ENCODE measurements at regions of chr1 and their contacts with region 1.

Region 1: DNA sequence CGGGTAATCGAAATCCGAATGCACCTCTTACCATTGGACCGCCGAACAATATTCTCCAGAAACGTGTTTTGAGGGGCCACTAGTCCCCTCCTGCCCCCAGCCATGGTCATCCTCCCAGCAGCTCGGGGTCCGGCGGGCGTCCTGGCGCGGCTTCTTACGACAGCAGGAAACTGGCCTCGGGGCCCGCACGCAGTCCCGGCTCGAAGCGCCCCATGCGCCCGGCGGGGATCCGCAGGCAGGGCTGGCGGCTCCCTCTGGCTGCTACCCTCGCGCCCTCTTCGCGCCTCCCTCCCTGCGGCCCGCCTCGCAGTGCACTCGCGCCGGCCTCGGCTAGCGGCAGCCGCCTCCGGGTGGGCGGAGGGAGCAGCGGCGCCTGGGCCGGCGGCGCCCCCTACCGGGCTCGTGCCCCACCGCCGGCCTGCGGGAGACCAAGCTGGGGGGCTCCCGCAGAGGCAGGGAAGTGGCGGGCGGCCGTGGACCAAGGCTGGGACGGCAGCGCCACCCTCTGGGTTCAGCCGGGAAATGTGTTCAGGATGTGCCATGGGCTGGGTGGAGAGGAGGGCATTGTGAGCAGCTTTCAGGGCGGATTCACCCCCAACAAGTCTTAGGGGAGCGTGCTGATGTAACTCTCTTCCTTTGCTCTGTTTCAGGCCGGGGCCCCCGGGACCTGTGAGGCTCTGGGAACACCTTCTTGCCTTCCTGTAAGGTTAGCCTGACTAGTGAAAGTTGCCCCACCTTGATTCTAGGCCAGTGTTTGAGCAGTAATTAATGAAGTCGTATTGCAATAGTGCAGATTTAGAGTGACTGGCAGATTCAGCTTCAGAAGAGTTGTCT is at the start of gene KCNH1:
- DNase-seq: peak; percentile 33
- H3K4me3 ChIP-seq: no peak within 1 kb of the TSS
- H3K27ac ChIP-seq: no peak within 1 kb of the TSS
- H3K4me1 ChIP-seq: no peaks in the 10 kb centered on the region
- CTCF ChIP-seq: peak; percentile 73
- total RNA-seq, gene KCNH1: not detected in 2 replicates

Region 2: GRCh38 chr1:210407207-210407886 is 726.7 kb before region 1 on chr1:
- CTCF ChIA-PET with region 1: no interaction called
- POLR2A ChIA-PET with region 1: no interaction called
- intact Hi-C with region 1: loop called (anchors 1 kb)
- DNase-seq: peak; percentile 63
- H3K4me3 ChIP-seq: no peak overlapping the region
- H3K27ac ChIP-seq: no peak overlapping the region
- H3K4me1 ChIP-seq: no peaks in the 10 kb centered on the region
- CTCF ChIP-seq: peak; percentile 96

Region 3: DNA sequence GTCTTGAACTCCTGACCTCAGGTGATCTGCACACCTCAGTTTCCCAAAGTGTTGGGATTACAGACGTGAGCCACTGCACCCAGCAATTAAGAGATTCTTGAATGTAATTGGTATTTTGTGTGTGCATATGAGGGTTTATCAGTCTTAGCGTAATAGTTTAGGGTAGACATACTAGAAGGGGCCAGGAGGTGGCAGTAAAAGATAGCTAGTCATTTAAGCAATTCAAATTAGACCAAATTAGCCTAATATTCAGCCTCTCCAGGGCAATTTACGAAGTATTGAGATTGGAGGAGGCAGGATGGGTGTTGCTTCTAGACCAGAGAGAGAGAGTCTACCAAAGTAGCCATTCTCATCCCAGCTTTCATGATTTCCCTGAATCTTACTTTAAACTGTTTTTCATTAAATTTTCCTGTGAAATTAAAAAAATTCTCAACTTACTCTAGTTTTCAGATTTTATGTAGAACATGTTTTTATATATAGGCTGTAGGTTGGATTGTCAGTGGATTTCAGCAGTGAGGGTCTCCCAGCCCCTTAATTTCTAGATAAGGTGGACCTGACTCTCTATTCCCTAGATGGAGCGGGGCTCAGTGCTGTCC is 685.7 kb before region 1 on chr1:
- CTCF ChIA-PET with region 1: no interaction called
- POLR2A ChIA-PET with region 1: interaction called, 10 read pairs
- intact Hi-C with region 1: loop called (anchors 5 kb)
- DNase-seq: peak; percentile 10
- H3K4me3 ChIP-seq: no peak overlapping the region
- H3K27ac ChIP-seq: no peak overlapping the region
- H3K4me1 ChIP-seq: no peaks in the 10 kb centered on the region
- CTCF ChIP-seq: peak; percentile 73

Region 4: DNA sequence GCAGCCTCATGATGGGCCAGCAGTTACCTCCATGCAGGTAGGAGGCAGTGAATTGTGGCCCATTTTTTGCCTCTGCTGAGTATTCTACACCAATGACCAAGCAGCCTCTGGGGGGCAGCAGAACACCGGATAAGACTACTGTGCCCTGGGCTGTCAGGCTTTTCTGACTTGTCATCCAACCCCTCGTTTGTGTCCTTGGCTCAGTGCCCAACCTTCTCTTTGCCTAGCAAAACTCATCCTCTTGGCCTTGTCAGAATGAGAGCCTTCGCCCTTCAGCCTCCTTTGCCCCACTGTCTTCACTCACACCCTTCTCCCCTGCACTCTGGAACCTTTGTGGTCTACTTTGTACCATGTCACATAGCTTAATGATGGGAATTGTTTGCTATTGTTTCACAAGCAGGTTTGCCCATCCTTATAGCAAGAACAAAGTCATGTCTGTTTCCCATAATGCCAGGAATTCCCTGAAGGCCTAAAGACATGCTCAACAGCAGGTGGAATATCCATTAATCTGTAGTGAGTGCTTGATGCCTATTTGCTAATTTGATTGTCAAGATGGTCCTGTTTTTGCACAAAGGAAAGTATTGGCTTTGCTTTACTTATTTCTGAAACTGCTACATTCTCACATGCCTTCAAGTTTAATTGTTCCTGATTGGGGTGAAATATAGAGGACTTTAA is 549.5 kb before region 1 on chr1:
- CTCF ChIA-PET with region 1: no interaction called
- POLR2A ChIA-PET with region 1: no interaction called
- intact Hi-C with region 1: loop called (anchors 2 kb)
- DNase-seq: peak; percentile 53
- H3K4me3 ChIP-seq: no peak overlapping the region
- H3K27ac ChIP-seq: no peak overlapping the region
- H3K4me1 ChIP-seq: no peaks in the 10 kb centered on the region
- CTCF ChIP-seq: peak; percentile 79

Region 5: GRCh38 chr1:211183747-211184313 is 49.8 kb after region 1 on chr1:
- CTCF ChIA-PET with region 1: no interaction called
- POLR2A ChIA-PET with region 1: no interaction called
- intact Hi-C with region 1: no loop called
- DNase-seq: no peak
- H3K4me3 ChIP-seq: no peak overlapping the region
- H3K27ac ChIP-seq: no peak overlapping the region
- H3K4me1 ChIP-seq: no peaks in the 10 kb centered on the region
- CTCF ChIP-seq: no peak

Measured in OCI-LY7 (cell line).